GM13977 (cell line): ENCODE measurements at regions of chr1 and their contacts with region 1.

Region 1: DNA sequence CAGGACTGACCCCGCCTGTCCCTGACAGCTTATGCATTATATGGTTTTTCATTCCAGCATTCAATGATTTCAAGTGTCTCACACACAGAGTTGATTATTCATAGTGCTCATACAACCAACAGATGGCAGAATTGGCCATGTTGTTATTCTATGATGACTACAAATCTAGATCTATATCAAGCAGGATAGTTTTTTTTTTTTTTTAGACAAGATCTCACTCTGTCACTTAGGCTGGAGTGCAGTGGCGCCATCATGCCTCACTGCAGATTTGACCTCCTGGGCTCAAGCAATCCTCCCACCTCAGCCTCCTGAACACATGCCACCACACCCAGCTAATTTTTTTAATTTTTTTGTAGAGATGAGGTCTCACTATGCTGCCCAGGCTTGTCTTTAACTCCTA is 40.1 kb upstream of the LRRC8D start:
- DNase-seq: peak; percentile 29
- CTCF ChIP-seq: peak; percentile 34

Region 2: DNA sequence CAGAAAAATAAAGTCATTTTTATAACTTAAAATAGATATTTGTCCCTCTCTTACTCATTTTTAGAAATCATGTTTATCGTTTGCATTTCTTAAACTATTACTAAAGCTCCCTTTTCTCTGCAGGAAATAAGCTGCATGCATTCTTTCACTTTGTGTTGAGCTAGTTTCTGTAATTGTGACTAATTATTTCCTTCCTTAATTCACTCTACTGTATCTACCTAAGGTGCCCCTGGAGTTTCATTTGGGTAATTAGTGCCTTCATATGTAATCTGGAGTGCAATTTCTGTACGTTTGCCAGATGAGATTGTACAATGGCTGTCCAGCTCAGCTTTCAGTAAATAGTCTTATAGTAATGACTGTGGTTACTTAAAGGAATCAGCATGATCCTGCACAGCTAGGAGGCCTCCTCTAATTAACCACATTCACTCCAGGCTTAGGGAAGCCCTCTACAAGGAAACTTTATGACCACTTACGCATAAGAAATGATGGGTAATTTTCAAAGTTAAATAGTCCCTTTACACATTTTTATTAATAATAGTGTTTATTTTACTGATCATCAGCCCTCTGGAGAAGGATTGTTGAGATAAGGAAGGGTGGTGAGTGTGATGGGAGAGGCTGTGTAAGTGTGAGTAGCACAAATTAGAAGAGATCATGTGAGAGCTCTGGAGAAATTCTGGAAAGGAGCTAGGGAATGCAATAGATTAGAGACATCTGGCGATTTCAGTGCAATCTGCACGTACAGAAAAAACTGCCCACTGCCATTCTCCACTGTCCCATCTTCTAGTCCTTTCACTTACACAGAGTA is 61.0 kb before region 1 on chr1:
- in situ Hi-C with region 1: no loop called
- DNase-seq: peak; percentile 54
- CTCF ChIP-seq: no peak

Region 3: DNA sequence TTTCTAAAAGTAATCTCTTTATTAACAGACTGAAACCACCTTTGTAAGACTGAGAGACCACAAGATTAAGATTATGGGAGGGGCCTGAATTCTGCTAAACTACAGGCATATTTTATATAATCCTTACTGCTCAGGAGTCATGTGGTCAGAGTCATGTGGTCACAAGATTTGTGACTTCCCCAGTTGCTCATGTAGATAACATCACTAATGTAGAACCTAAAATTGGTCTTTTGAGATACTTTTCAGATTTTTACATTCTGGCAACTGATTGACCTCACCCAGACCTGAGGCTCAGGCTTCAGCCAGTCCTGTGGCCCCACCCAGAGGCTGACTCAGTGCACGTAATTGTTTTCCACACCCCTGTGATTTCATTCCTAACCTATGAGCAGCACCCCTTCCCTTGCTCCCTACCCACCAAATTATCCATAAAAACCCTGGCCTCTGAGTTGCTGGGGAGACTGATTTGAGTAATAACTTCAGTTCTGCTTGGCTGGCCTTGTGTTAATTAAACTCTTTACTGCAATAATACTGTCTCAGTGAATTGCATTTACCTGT is 172.4 kb after region 1 on chr1:
- in situ Hi-C with region 1: loop called (anchors 10 kb)
- DNase-seq: no peak
- CTCF ChIP-seq: peak; percentile 61

Region 4: DNA sequence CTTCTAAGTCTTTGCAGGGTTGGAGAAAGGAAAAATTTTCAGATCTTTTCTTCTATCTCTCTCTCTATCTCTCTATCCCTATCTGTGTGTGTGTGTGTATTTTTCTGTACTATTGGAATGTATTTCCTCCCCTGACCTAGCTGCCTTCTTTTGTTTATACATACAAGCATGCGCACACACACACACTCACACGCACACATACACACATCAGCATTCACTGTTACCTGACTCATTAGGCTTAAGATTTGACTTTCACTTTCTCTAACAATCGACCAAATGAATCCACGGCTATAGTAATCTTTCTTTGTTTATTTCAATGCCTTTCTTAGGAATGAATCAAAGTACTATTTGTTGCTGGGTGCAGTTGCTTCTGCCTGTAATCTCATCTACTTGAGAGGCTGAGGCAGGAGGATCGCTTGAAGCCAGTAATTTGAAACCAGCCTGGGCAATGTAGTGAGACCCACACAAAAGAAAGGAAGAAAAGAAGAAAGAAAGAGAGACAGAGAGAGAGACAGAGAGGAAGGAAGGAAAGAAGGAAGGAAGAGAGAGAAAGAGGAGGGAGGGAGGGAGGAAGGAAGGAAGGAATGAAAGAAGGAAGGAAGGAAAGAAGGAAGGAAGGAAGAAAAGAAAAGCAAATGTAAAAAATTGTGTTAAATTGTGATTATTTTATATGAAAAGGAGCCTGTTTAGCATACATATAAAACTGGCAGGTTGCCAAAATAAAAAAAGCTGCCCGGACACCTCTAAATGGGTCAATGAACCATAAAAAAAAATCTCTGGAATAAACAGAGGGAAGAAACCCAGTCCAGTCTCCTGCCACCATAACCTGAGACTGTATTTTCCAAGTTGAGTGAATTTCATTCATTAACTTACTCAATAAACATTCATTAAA is 421.0 kb after region 1 on chr1:
- in situ Hi-C with region 1: no loop called
- DNase-seq: no peak
- CTCF ChIP-seq: no peak